WTC11 (cell line): ENCODE measurements at regions of chr17 and their contacts with region 1.

Region 1: DNA sequence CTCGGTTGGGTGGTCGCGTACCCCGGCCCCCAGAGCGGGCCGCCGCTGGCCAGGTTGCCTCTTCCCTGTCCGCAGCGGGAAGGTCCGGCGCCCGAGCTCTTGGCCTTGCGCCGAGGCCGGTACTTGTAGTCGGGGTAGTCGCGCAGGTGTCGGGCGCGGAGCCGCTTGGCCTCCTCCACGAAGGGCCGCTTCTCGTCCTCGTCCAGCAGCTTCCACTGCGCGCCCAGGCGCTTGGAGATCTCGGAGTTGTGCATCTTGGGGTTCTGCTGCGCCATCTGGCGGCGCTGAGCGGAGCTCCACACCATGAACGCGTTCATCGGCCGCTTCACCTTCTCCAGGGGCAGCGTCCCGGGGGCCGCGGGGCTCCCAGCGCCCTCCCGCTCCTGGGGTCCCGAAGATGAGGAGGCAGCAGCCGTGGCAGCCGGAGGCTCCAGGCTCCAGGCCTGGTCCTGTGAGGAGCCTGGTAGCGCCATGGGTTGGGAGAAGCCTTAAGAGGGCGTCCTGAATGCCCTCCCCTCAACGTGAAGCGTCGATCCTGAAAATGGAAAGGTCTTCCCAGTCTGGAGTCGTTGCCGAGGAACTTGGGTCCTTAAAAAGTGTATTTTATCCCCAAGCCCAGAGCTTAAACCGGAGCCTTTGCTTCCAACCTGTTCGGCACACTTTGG is 558 bp downstream of the SOX15 start:
- DNase-seq: peak; percentile 91
- ATAC-seq: peak; percentile 71
- H3K4me3 Mint-ChIP-seq: peak overlapping the region; percentile 70
- H3K27ac Mint-ChIP-seq: peak overlapping the region; percentile 79
- H3K4me1 Mint-ChIP-seq: peaks cover 38% of the 10 kb centered on the region
- H3K27me3 Mint-ChIP-seq: no peaks in the 10 kb centered on the region
- CTCF ChIP-seq: peak; percentile 87

Region 2: GRCh38 chr17:7435221-7435675 is 154.1 kb before region 1 on chr17 and contains the start of gene TMEM102:
- CTCF ChIA-PET with region 1: interaction called, 17 read pairs
- POLR2A ChIA-PET with region 1: no interaction called
- DNase-seq: peak; percentile 98
- ATAC-seq: peak; percentile 71
- H3K4me3 Mint-ChIP-seq: peak within 1 kb of the TSS; percentile 90
- H3K27ac Mint-ChIP-seq: peak within 1 kb of the TSS; percentile 98
- H3K4me1 Mint-ChIP-seq: peaks cover 17% of the 10 kb centered on the region
- H3K27me3 Mint-ChIP-seq: peaks cover 17% of the 10 kb centered on the region
- CTCF ChIP-seq: no peak
- total RNA-seq, gene TMEM102: 13.5 to 15.3 TPM (median 13.9 TPM) in 3 replicates

Region 3: DNA sequence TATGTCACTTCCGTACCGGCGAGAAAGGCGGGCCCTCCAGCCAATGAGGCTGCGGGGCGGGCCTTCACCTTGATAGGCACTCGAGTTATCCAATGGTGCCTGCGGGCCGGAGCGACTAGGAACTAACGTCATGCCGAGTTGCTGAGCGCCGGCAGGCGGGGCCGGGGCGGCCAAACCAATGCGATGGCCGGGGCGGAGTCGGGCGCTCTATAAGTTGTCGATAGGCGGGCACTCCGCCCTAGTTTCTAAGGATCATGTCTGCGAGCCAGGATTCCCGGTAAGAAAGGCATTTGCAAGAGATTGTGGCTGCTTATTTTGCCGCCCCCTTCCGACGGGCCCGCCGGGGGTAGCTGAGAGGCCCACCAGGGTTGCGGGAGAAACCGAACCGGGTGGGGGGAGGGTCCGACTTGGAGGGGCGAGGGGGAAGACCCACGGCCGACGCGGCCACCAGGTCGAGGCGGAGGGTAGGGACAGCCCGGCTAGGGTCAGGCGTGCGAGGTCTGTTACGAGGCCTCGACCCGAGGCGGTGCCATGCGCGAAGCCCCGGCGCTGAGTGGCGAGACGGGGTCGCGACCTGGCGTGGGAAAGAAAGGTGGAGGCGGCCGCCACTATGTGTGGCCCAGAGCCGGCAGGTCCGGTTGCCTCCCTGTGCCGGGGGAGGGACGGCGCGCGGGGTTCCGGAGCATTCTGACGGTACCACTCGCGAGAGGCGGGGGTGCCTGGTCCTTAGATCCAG is 16.6 kb before region 1 on chr17:
- CTCF ChIA-PET with region 1: interaction called, 10 read pairs
- POLR2A ChIA-PET with region 1: interaction called, 22 read pairs
- DNase-seq: peak; percentile 100
- ATAC-seq: no peak; the same call in 1 of the 2 replicates
- H3K4me3 Mint-ChIP-seq: peak overlapping the region; percentile 93
- H3K27ac Mint-ChIP-seq: peak overlapping the region; percentile 100
- H3K4me1 Mint-ChIP-seq: peaks cover 46% of the 10 kb centered on the region
- H3K27me3 Mint-ChIP-seq: no peaks in the 10 kb centered on the region
- CTCF ChIP-seq: no peak

Region 4: DNA sequence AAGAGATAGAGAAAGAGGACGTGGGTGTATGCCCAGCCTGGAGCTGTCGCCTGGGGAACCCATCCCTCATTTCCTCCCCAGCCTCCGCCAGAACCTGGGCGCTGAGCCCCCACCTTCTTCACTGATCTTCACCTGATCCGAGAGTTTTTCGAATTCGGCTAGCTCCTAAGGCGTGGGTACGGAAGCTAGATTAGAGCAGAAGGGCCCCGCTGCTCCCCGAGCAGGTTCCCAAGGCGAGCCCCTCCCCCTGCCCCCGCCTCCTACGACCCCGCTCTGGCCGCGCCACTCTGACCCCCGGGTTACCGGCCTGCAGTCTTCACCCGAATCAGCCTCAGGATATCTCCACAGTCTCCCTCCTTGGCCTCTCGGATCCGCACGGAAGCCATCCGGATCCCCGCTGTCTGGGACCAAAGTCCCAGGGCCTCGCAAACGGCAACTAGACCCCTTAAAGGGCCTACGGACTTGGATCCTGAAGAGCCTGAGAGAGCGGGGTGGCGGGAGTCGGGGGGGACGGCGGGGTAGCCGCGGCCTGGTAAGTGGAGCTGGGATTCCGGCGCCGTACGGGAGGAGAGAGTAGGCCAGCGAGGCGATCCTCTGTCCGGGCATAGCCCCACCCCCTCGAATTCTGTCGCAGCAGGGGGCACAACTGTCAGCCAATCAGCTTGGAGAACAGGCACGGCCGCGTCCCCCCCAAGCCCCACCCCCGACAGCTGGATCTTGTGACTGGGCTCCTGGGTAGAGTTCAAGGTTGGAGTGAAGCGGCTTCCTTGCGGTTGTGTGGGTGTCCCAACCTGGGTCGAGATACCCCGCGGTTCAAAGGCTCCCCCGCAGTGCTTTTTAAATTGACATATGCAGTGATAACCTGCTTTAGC is 38.1 kb after region 1 on chr17 and contains the start of gene SAT2:
- CTCF ChIA-PET with region 1: interaction called, 29 read pairs
- POLR2A ChIA-PET with region 1: interaction called, 12 read pairs
- DNase-seq: peak; percentile 99
- ATAC-seq: peak; percentile 87
- H3K4me3 Mint-ChIP-seq: peak within 1 kb of the TSS; percentile 85
- H3K27ac Mint-ChIP-seq: peak within 1 kb of the TSS; percentile 85
- H3K4me1 Mint-ChIP-seq: peaks cover 9% of the 10 kb centered on the region
- H3K27me3 Mint-ChIP-seq: no peaks in the 10 kb centered on the region
- CTCF ChIP-seq: no peak
- total RNA-seq, gene SAT2: 68.3 to 75.8 TPM (median 73.1 TPM) in 3 replicates

Region 5: GRCh38 chr17:7650509-7651096 is 61.3 kb after region 1 on chr17 and contains the start of gene ATP1B2:
- CTCF ChIA-PET with region 1: interaction called, 17 read pairs
- POLR2A ChIA-PET with region 1: interaction called, 14 read pairs
- DNase-seq: peak; percentile 96
- ATAC-seq: peak; percentile 97
- H3K4me3 Mint-ChIP-seq: peak within 1 kb of the TSS; percentile 83
- H3K27ac Mint-ChIP-seq: peak within 1 kb of the TSS; percentile 73
- H3K4me1 Mint-ChIP-seq: peaks cover 33% of the 10 kb centered on the region
- H3K27me3 Mint-ChIP-seq: peaks cover 53% of the 10 kb centered on the region
- CTCF ChIP-seq: no peak
- total RNA-seq, gene ATP1B2: 29.1 to 37.5 TPM (median 35.9 TPM) in 3 replicates

Region 6: GRCh38 chr17:7673239-7673638 is 83.9 kb after region 1 on chr17:
- CTCF ChIA-PET with region 1: interaction called, 12 read pairs
- POLR2A ChIA-PET with region 1: no interaction called
- DNase-seq: peak; percentile 78
- ATAC-seq: no peak
- H3K4me3 Mint-ChIP-seq: no peak overlapping the region
- H3K27ac Mint-ChIP-seq: no peak overlapping the region; the same call in 1 of the 2 replicates
- H3K4me1 Mint-ChIP-seq: peaks cover 31% of the 10 kb centered on the region
- H3K27me3 Mint-ChIP-seq: no peaks in the 10 kb centered on the region; the same call in 1 of the 2 replicates
- CTCF ChIP-seq: peak; percentile 58

Region 7: GRCh38 chr17:7716901-7717755 is 127.8 kb after region 1 on chr17 and contains the start of gene DNAH2:
- CTCF ChIA-PET with region 1: interaction called, 21 read pairs
- POLR2A ChIA-PET with region 1: interaction called, 4 read pairs
- DNase-seq: peak; percentile 96
- ATAC-seq: peak; percentile 88
- H3K4me3 Mint-ChIP-seq: peak within 1 kb of the TSS; percentile 83
- H3K27ac Mint-ChIP-seq: peak within 1 kb of the TSS; percentile 72; the same call in 1 of the 2 replicates
- H3K4me1 Mint-ChIP-seq: peaks cover 36% of the 10 kb centered on the region
- H3K27me3 Mint-ChIP-seq: peaks cover 47% of the 10 kb centered on the region
- CTCF ChIP-seq: no peak
- total RNA-seq, gene DNAH2: 0.17 to 0.34 TPM (median 0.27 TPM) in 3 replicates

Region 8: DNA sequence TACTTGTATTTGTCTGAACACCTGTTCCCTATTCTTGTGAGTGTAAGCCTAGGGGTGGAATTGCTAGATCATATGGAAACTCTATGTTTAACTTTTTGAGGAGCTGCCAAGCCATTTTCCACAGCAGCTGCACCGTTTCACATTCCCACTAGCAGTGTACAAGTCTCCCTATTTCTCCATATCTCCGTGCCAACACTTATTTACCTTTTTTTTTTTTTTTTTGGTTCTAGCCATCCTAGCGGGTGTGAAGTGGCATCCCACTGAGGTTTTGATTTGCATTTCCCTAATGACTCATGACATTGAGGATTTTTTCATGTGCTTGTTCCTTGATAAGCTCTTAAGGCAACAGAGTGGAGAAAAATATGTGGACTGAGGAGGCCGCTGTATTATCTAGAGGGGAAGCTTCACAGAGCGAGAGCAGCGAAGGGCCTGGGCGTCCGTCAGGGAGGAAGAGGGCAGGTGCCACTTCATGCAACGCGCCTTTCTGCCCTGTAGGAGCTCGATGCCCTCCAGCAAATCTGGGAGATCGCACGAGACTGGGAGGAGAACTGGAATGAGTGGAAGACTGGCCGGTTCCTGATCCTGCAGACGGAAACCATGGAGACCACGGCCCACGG is 178.2 kb after region 1 on chr17:
- CTCF ChIA-PET with region 1: no interaction called
- POLR2A ChIA-PET with region 1: no interaction called
- DNase-seq: no peak
- ATAC-seq: no peak
- H3K4me3 Mint-ChIP-seq: no peak overlapping the region
- H3K27ac Mint-ChIP-seq: 0 out of 2 replicates have a peak overlapping the region, but pooled peaks have one; percentile 14
- H3K4me1 Mint-ChIP-seq: peaks cover 5% of the 10 kb centered on the region; the same call in 1 of the 2 replicates
- H3K27me3 Mint-ChIP-seq: no peaks in the 10 kb centered on the region
- CTCF ChIP-seq: no peak